ENCODE measurements at regions of chr3 and their contacts with region 1.

Region 1: GRCh38 chr3:82807781-82808180 is 1046.3 kb upstream of the GBE1 start:
- DNase-seq: no peak
- ATAC-seq: no peak
- H3K4me3 ChIP-seq: no peak overlapping the region
- H3K27ac ChIP-seq: no peak overlapping the region
- H3K4me1 ChIP-seq: no peaks in the 10 kb centered on the region
- H3K27me3 ChIP-seq: no peaks in the 10 kb centered on the region
- CTCF ChIP-seq: no peak

Region 2: GRCh38 chr3:81442758-81443456 is 1364.9 kb before region 1 on chr3:
- CTCF ChIA-PET with region 1: no interaction called
- POLR2A ChIA-PET with region 1: interaction called, 10 read pairs
- in situ Hi-C with region 1: no loop called
- intact Hi-C with region 1: no loop called
- DNase-seq: no peak
- ATAC-seq: no peak
- H3K4me3 ChIP-seq: no peak overlapping the region
- H3K27ac ChIP-seq: no peak overlapping the region
- H3K4me1 ChIP-seq: no peaks in the 10 kb centered on the region
- H3K27me3 ChIP-seq: no peaks in the 10 kb centered on the region
- CTCF ChIP-seq: no peak

Region 3: GRCh38 chr3:82790307-82791097 is 17.3 kb before region 1 on chr3:
- CTCF ChIA-PET with region 1: no interaction called
- POLR2A ChIA-PET with region 1: no interaction called
- in situ Hi-C with region 1: no loop called
- intact Hi-C with region 1: no loop called
- DNase-seq: no peak
- ATAC-seq: no peak
- H3K4me3 ChIP-seq: no peak overlapping the region
- H3K27ac ChIP-seq: no peak overlapping the region
- H3K4me1 ChIP-seq: no peaks in the 10 kb centered on the region
- H3K27me3 ChIP-seq: no peaks in the 10 kb centered on the region
- CTCF ChIP-seq: no peak

Measured in Panc1 (cell line).